Activated CD4-positive, alpha-beta T cell treated with anti-CD3 and anti-CD28 coated beads for 36 hours (primary cell): ENCODE measurements at regions of chr10 and their contacts with region 1.

Region 1: GRCh38 chr10:132307823-132308587 is at the start of gene STK32C:
- DNase-seq: peak; percentile 96
- ATAC-seq: peak; percentile 86
- H3K4me3 Mint-ChIP-seq: peak within 1 kb of the TSS; percentile 84
- H3K27ac Mint-ChIP-seq: no peak within 1 kb of the TSS
- H3K4me1 Mint-ChIP-seq: peaks cover 8% of the 10 kb centered on the region
- H3K27me3 Mint-ChIP-seq: peaks cover 2% of the 10 kb centered on the region
- total RNA-seq, gene STK32C: 15.8 to 19.9 TPM

Region 2: DNA sequence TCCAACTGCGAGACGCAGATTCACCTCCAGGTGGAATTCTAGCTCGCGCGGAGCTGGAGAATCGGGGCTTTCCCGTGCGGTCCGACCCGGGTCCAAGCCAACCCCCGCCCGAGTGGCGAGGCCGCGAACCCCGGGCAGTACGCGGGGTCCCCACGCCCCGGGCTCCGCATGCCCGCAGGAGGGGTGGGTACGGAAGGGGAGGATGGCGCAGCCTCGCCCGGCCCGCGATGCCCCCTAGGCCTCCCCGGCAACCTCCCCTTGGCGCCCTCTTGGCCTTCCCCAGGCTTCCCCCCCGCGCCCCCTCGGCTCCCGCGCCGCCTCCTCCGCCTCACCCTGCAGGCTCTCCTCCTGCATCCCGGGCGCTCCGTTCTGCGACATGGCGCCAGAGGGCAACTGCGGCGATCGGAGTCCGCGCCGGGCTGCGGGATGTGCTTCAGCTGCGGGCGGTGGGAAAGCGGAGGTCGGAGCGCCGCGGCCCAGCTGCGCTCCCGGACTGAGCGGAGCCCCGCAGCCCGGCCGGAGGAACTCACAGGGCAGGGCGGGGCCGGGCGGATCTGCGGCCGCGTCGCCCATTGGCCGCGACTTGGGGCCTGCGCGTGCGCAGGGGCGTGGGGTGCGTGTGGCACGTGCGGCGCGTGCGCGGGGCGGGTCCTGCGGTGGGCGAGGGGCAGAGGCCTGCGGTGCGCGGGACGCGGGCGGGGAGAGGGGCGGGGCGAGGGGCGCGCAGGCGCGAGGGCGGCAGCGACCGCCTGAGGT is 326.4 kb before region 1 on chr10 and contains the start of gene BNIP3:
- CTCF ChIA-PET with region 1: no interaction called
- POLR2A ChIA-PET with region 1: no interaction called
- intact Hi-C with region 1: loop called in 1 of 2 experiments (anchors 5 kb)
- DNase-seq: peak; percentile 97
- ATAC-seq: peak; percentile 90
- H3K4me3 Mint-ChIP-seq: peak within 1 kb of the TSS; percentile 90
- H3K27ac Mint-ChIP-seq: peak within 1 kb of the TSS; percentile 79
- H3K4me1 Mint-ChIP-seq: peaks cover 36% of the 10 kb centered on the region
- H3K27me3 Mint-ChIP-seq: no peaks in the 10 kb centered on the region
- total RNA-seq, gene BNIP3: 200 to 256 TPM

Region 3: GRCh38 chr10:132185601-132186487 is 122.2 kb before region 1 on chr10:
- CTCF ChIA-PET with region 1: no interaction called
- POLR2A ChIA-PET with region 1: no interaction called
- intact Hi-C with region 1: loop called in 1 of 2 experiments (anchors 1 kb)
- DNase-seq: peak; percentile 76
- ATAC-seq: peak; percentile 85
- H3K4me3 Mint-ChIP-seq: no peak overlapping the region
- H3K27ac Mint-ChIP-seq: no peak overlapping the region
- H3K4me1 Mint-ChIP-seq: peaks cover 3% of the 10 kb centered on the region
- H3K27me3 Mint-ChIP-seq: peaks cover 37% of the 10 kb centered on the region

Region 4: GRCh38 chr10:132331526-132332432 is 23.8 kb after region 1 on chr10 and contains the start of gene LRRC27:
- CTCF ChIA-PET with region 1: no interaction called
- POLR2A ChIA-PET with region 1: no interaction called
- intact Hi-C with region 1: loop called (anchors 1 kb)
- DNase-seq: peak; percentile 99
- ATAC-seq: peak; percentile 86
- H3K4me3 Mint-ChIP-seq: peak within 1 kb of the TSS; percentile 80
- H3K27ac Mint-ChIP-seq: peak within 1 kb of the TSS; percentile 81
- H3K4me1 Mint-ChIP-seq: peaks cover 56% of the 10 kb centered on the region
- H3K27me3 Mint-ChIP-seq: no peaks in the 10 kb centered on the region
- total RNA-seq, gene LRRC27: 3.6 to 4.1 TPM

Region 5: DNA sequence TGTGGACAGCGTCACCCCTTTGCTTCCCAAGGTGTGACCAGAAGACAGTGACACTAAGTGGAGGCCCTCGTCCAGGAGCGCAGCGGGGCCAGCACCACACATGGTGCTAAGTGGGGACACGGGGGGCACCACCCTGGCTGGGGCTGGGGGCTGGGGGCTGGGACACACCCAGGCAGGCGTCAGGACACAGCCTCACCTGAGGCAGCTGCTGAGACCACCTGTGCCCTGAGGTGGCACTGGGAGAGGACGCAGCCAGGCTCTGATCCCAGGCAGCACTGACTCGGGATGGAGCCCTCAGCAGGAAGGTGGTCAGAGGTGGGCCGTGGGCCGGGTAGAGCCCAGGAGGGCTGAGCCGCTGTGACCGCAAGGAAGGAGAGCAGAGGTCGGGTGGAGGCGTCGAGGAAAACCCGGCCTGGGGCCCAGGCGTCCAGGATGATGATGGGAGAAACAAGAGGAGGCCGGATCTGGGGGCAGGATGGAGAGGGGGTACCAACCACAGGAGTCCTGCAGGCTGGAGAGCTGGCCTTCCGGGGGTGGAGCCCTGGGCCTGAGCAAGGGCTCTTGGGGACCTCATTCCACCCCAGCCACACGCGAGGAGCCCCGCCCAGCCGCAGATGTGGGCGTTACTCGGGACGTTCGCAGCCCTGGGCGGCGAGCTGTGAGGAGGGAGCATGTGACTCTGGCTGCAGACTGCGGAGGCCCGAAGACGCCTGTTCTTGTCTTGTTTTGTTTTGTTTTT is 46.5 kb after region 1 on chr10:
- CTCF ChIA-PET with region 1: no interaction called
- POLR2A ChIA-PET with region 1: no interaction called
- intact Hi-C with region 1: no loop called
- DNase-seq: no peak
- ATAC-seq: no peak
- H3K4me3 Mint-ChIP-seq: no peak overlapping the region
- H3K27ac Mint-ChIP-seq: no peak overlapping the region
- H3K4me1 Mint-ChIP-seq: no peaks in the 10 kb centered on the region
- H3K27me3 Mint-ChIP-seq: no peaks in the 10 kb centered on the region

Region 6: DNA sequence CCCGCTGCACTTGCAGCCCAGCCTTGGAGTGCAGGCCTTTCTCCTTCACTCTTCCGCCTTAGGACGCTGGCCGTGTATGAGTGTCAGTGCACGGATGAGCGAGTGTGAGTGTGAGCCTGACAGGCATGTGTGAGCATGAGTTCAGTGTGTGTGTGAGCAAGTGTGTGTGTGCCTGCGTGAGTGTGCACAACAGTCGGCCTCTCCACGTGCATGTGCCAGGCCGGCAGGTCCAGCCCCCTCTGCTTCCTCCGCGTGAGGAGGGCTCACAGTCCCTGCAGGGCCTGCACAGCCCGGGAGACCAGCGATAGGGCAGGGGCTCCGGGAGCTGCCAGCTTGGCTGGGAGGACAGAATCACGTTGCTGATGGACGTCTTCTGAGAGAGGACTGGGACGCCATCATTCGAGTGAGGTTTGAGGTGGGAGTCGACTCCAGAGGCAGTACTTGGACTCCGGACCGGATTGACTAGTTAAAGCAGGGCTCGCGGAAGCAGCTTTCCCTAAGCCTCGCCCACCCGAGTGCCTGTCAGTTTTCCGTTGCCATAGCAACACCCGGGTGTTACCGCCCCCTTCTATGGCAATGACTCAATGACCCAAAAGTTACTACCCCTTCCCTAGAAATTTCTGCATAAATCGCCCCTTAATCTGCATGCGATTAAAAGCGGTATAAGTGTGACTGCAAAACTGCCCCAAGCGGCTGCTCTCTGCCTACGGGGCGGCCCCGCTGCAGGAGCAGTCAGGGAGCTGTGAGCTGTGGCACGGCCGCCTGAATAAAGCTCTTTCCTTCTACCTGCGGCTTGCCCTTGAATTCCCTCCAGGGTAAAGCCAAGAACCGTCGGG is 654.0 kb after region 1 on chr10:
- CTCF ChIA-PET with region 1: no interaction called
- POLR2A ChIA-PET with region 1: no interaction called
- intact Hi-C with region 1: loop called in 1 of 2 experiments (anchors 10 kb)
- DNase-seq: peak; percentile 90
- ATAC-seq: peak; percentile 82
- H3K4me3 Mint-ChIP-seq: peak overlapping the region; percentile 73
- H3K27ac Mint-ChIP-seq: peak overlapping the region; percentile 71
- H3K4me1 Mint-ChIP-seq: peaks cover 26% of the 10 kb centered on the region
- H3K27me3 Mint-ChIP-seq: peaks cover 26% of the 10 kb centered on the region

Region 7: DNA sequence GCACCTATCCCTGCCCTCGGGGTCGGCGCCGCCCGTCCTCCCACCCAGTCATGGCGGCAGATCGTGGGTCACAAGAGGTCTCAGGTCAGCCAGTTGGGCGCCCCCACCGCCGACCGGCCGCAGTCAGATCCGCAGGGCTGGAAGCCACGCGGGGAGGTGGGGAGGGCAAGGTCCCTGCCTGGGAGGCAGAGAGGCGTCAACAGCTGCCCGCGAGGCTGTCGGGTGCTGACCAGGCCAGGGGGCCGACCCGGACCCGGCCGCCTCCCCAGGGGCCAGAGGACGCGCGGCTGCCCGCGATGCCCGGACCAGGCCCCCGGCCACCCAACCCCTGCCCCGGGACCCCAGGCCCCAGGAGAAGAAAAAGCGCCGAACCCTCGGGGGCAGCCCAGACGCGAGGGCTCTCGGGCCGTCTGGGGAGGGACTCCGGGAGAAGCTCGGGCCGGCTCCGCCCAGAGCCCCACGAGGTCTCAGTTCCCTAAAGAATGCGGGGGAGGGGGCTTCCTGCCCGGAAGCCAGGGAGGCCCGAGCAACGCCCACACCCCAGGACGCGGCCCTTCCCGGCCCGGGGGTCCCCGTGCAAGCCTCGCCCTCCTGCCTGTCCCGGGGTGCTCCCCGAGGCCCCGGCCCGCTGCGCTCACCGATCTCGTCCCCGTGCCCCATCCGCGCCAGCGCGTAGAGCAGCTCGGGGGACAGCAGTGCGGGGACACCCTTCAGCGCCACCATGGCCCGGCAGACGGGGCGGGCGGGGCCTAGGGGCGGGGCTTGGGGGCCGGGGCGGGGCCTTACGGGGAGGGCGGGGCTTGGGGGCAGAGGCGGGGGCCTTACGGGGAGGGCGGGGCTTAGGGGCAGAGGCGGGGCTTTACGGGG is 1049.5 kb after region 1 on chr10 and contains the start of gene FUOM:
- CTCF ChIA-PET with region 1: no interaction called
- POLR2A ChIA-PET with region 1: no interaction called
- intact Hi-C with region 1: loop called in 1 of 2 experiments (anchors 5 kb)
- DNase-seq: peak; percentile 87
- ATAC-seq: peak; percentile 92
- H3K4me3 Mint-ChIP-seq: peak within 1 kb of the TSS; percentile 77
- H3K27ac Mint-ChIP-seq: peak within 1 kb of the TSS; percentile 60
- H3K4me1 Mint-ChIP-seq: peaks cover 7% of the 10 kb centered on the region
- H3K27me3 Mint-ChIP-seq: no peaks in the 10 kb centered on the region
- total RNA-seq, gene FUOM: 28.3 to 37.0 TPM